ENCODE measurements at regions of chr17 and their contacts with region 1.

Region 1: DNA sequence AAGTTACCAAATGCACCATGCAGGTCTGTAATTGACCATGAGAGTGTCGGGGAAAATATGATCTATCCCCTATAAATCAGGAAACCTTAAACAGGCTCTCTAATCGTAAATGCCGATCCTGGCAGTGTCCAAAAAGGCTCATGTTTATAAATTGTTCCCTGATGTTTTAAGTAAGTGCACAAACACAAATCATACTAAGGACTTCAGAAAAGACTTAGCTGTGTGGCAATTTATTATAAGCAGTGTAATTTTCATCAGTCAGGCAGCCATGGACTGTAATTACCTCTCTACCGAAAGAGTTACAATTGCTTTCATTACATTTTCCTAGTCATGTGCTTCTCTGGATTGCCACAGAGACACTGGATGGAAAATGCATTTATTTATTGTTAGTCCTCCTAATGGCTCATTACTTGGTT is 73.4 kb upstream of the COX10 start:
- DNase-seq: no peak
- ATAC-seq: no peak
- H3K4me3 ChIP-seq: no peak overlapping the region
- H3K27ac ChIP-seq: no peak overlapping the region
- H3K4me1 ChIP-seq: no peaks in the 10 kb centered on the region
- H3K27me3 ChIP-seq: no peaks in the 10 kb centered on the region
- CTCF ChIP-seq: no peak

Region 2: DNA sequence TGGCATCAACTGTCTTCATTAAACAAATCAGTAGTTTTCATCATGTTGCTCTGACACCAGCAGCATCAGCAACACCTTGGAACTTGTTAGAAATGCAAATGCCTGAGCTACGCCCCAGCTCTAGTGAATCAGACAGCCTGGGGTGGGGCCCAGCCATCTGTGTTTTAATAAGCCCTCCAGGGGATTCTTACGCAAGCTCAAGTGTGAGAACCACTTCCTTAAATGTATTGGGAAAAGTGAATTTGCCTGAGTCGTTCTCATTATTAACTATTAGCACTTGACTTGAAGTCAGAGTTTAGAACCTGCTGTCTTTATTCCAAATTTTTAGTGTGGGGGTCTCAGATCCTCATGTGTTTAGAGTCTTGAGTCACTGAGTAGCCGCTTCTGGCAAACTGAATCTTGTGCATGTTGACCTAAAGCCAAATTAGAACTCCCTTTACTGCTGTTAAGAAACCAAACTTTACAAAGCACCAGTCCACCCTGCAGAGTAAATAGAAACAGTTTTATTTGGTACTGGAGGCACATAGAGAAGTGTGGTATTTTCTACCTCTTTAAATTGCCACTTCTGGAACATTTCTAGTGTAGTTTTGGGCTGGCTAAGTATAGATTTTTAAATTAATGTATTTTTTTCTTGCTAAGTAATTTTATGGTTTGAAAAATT is 63.9 kb before region 1 on chr17:
- CTCF ChIA-PET with region 1: no interaction called
- POLR2A ChIA-PET with region 1: interaction called, 12 read pairs
- in situ Hi-C with region 1: no loop called
- intact Hi-C with region 1: no loop called
- DNase-seq: no peak
- ATAC-seq: no peak
- H3K4me3 ChIP-seq: no peak overlapping the region
- H3K27ac ChIP-seq: no peak overlapping the region
- H3K4me1 ChIP-seq: no peaks in the 10 kb centered on the region; the same call in 1 of the 2 replicates
- H3K27me3 ChIP-seq: no peaks in the 10 kb centered on the region
- CTCF ChIP-seq: no peak

Measured in Panc1 (cell line).